Posterior vena cava (tissue), 2 donors: ENCODE measurements at regions of chr10 and their contacts with region 1.

Region 1: GRCh38 chr10:131885391-131886161 is 15.2 kb upstream of the PPP2R2D start:
- DNase-seq: peak; percentile 91

Region 2: GRCh38 chr10:132023092-132023811 is 137.7 kb after region 1 on chr10:
- intact Hi-C with region 1: loop called in 1 of 2 experiments (anchors 5 kb)
- DNase-seq: peak; percentile 95

Region 3: GRCh38 chr10:132142411-132143161 is 257.0 kb after region 1 on chr10:
- intact Hi-C with region 1: loop called in 1 of 2 experiments (anchors 10 kb)
- DNase-seq: peak; percentile 81